ENCODE measurements at regions of chr1 and their contacts with region 1.

Region 1: DNA sequence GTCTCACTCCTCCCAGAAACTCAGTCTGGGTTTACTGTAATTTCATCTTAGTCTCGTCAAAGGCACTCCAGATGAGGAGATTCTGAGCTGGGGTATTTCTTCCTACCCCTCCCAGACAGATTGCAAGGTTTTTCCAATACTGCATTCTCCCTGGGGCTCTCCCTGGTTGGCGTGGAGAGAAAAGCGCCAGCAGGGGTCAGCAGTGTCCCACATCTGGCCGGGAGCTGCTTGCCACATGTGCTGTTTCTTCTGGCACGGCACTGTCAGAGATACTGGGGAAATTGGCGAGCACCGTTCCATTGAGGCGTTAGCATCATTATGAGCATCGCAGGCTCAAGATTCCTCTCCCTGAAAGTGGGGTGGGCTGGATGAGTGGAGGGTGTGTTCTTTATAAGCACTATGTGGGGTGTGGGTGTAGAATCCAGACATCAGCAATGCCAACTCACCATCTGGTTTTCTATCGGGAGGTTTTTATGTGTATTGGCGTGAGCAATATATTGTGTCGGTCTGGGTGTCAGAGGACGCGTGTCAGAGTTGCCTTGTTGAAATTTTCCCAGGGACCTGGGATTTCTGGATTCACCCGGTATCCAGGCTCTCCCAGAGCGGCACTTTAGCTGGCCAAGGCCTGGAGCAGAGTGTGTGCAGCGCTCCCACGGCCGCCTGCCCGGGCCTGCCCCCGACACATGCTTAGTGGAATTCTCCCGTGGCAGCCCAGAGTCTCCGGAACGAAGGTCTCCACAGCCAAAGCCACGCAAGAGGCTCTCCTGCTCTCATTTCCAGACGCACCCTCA is 8.0 kb upstream of the NAV1 start:
- DNase-seq: peak in 1 of 2 donors; percentile 94
- H3K4me3 ChIP-seq: no peak overlapping the region
- H3K27ac ChIP-seq: peak overlapping the region; percentile 90
- H3K4me1 ChIP-seq: peaks cover 36% of the 10 kb centered on the region
- H3K27me3 ChIP-seq: no peaks in the 10 kb centered on the region
- CTCF ChIP-seq: peak; percentile 45 to 77 (median 69)
- POLR2A ChIP-seq: no peak

Region 2: DNA sequence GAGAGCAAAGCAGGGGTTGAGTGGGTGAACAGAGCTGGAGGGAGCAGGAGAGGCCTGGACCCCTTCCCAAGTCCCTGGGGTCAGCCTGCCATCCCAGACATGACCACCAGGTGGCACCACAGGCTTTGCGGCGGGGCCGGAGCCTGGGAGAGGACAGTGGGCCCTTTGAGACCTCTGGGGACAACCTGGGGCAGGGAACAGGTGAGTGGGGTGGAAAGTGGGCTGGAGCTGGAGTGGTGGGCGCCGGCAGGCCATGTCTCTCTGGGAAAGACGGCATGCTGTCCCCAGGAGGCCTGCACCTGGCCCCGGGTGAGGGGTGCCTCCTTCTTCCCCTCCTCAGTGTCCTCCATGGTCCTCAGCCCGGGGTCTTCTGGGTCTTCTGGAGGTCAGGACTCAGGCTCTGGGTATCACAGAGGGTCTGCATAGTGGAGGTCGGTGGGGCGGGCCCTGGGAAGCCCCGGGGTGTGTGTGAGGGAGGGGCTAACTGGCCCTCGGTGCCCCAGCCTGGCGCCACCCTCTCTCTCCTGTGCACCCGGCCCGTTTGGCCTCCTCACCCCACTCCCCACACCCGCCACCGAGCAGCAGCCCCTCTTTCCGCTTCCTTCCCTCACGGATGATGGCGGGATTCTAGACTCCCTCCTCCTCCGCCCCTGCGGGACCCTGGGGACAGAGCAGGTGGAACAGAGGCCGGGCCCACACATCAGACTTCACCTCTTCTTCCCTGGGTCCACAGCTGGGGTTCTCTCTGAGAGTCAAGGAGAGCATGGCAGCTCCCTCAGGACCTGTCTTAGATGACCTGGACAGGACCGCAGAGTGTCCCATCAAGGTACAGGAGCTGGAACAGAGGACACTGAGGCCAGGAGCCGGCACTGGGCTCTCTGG is 276.1 kb before region 1 on chr1:
- intact Hi-C with region 1: no loop called
- DNase-seq: peak; percentile 80 to 95
- H3K4me3 ChIP-seq: no peak overlapping the region
- H3K27ac ChIP-seq: peak overlapping the region; percentile 56
- H3K4me1 ChIP-seq: peaks cover 19% of the 10 kb centered on the region
- H3K27me3 ChIP-seq: no peaks in the 10 kb centered on the region
- CTCF ChIP-seq: peak; percentile 91 to 95 (median 93)
- POLR2A ChIP-seq: no peak

Region 3: GRCh38 chr1:201792534-201793305 is 261.8 kb after region 1 on chr1:
- intact Hi-C with region 1: loop called (anchors 2 kb)
- DNase-seq: peak in 1 of 2 donors; percentile 93
- H3K4me3 ChIP-seq: no peak overlapping the region
- H3K27ac ChIP-seq: peak overlapping the region; percentile 81
- H3K4me1 ChIP-seq: peaks cover 42% of the 10 kb centered on the region
- H3K27me3 ChIP-seq: no peaks in the 10 kb centered on the region
- CTCF ChIP-seq: peak; percentile 97
- POLR2A ChIP-seq: no peak

Region 4: GRCh38 chr1:201955009-201955728 is 424.2 kb after region 1 on chr1 and contains the start of gene TIMM17A:
- intact Hi-C with region 1: loop called (anchors 10 kb)
- DNase-seq: peak in 1 of 2 donors; percentile 97
- H3K4me3 ChIP-seq: peak within 1 kb of the TSS; percentile 93 to 94
- H3K27ac ChIP-seq: peak within 1 kb of the TSS; percentile 83
- H3K4me1 ChIP-seq: peaks cover 22% of the 10 kb centered on the region
- H3K27me3 ChIP-seq: no peaks in the 10 kb centered on the region
- CTCF ChIP-seq: no peak
- POLR2A ChIP-seq: peak in 1 of 2 donors; percentile 62
- total RNA-seq, gene TIMM17A: 18.9 TPM

Measured in vagina (tissue), 2 donors.